SK-MEL-5 (cell line): ENCODE measurements at regions of chr7 and their contacts with region 1.

Region 1: GRCh38 chr7:91880413-91881241 is at the start of gene MTERF1:
- DNase-seq: peak; percentile 97
- total RNA-seq, gene MTERF1: 32.1 and 35.6 TPM in 2 replicates

Region 2: GRCh38 chr7:90474284-90475210 is 1406.1 kb before region 1 on chr7:
- in situ Hi-C with region 1: no loop called
- DNase-seq: no peak

Region 3: DNA sequence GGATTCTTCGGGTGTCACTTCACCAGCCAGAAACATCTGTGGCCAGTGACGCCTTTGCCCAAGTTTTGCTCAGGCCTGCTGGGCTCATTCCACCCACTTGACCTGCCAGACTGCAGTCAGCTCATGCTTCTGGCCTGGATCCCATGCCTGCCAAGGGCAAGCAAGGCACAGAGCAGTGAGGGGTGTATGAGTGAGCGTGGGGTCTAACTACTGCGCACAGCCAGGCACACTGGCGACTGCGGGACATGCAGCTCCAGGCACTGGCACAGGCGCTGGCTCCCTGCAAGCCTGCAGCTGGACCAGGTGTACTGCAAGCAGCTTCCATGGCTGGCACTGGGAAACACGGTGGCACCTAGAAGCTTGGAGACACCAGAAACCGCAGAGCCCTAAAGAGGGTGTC is 80.2 kb before region 1 on chr7:
- in situ Hi-C with region 1: no loop called
- DNase-seq: no peak

Region 4: DNA sequence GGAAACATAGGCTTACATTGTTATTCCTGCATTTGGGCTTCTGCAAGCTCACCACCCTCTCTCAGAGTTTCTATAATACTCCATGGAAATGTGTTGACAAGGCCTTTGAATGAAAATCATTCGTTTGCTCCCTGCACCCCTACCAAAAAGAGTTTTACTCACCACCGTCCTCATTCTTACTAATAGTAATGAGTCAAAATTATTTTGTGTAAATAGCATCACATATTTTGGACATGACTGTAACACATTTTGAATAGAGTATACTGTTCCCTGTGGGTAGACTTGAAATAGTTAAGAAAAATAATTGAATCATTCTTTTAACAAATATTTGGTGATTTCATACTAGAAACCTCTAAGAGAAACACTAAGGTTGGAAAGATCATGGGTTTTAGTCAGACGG is 144.6 kb after region 1 on chr7:
- in situ Hi-C with region 1: no loop called
- DNase-seq: peak; percentile 46

Region 5: GRCh38 chr7:92115821-92116220 is 235.2 kb after region 1 on chr7:
- in situ Hi-C with region 1: no loop called
- DNase-seq: no peak

Region 6: DNA sequence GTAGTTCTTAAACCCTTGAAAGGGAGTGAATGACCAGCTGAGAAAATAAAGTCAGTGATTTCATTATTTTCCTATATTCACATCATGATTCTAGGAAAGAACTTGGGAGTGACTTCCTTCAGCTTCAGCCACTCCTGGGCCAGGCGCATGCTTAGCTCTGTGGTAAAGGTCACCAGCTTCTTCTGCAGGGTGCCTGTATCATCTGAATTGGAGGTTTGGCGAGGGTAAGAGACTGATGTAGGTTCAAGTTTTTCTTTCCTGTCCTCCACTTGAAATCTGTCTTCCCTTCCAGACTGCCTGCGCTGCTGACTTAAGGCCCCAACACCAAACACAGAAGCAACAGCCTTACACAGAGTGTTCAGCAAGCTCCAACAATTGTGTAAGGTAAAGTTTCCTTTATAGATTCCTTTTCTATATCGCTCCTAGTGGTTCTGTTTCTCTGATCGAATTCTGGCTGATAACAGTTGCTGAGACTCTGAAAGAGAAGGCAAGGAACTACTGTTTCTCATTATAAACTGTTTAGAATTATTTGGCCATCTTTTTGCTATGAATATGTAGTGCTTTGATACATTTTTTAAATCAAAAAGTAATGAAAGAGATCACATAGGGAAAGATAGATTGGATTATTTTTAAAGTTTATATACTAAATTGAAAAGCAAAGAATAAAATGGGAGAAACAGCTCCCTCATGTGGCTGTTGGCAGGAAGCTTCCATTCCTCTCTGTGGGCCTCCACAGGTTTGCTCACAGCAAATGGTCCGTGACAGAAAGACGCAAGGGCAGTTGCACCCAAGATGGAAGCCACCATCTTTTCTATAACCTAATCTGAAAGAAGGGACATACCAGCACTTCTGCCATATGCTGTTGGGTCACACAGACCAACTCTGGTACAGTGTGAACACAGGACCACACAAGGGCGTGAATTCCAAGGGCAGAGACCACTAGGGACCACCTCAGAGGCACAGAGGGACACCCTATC is 580.7 kb after region 1 on chr7:
- in situ Hi-C with region 1: loop called (anchors 25 kb)
- DNase-seq: peak; percentile 87